ENCODE measurements at regions of chr16 and their contacts with region 1.

Region 1: GRCh38 chr16:77660311-77660710 is 62.0 kb upstream of the NUDT7 start:
- DNase-seq: no peak
- ATAC-seq: no peak
- H3K4me3 ChIP-seq: no peak overlapping the region
- H3K27ac ChIP-seq: no peak overlapping the region
- H3K4me1 ChIP-seq: no peaks in the 10 kb centered on the region
- H3K27me3 ChIP-seq: no peaks in the 10 kb centered on the region

Region 2: DNA sequence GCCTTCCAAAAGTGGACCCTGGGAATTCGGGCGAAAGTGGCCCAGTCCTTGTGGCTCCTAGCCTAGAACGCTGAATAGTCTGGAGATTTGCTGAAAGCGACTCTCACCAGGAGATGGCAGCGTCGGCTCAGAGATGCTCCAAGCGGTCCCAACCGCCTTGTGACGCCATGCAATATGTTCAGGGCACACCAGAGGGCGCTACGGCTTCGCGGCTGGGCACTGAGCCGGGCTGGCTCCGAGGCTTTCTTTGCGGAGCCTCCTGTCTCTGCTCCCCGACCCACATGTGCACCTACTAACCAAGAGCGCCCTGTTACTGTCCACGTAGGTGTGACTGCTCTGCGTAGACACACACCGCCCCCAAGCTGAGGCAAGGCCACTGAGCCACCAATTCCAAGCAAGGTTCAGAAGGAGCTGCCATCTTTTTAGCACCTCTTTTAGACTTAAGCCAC is 424.2 kb before region 1 on chr16:
- intact Hi-C with region 1: loop called in 3 of 4 experiments (anchors 5 to 10 kb)
- DNase-seq: peak; percentile 85 to 93 (median 93)
- ATAC-seq: peak; percentile 97
- H3K4me3 ChIP-seq: peak overlapping the region; percentile 22
- H3K27ac ChIP-seq: no peak overlapping the region
- H3K4me1 ChIP-seq: peaks cover 2% of the 10 kb centered on the region
- H3K27me3 ChIP-seq: no peaks in the 10 kb centered on the region

Region 3: DNA sequence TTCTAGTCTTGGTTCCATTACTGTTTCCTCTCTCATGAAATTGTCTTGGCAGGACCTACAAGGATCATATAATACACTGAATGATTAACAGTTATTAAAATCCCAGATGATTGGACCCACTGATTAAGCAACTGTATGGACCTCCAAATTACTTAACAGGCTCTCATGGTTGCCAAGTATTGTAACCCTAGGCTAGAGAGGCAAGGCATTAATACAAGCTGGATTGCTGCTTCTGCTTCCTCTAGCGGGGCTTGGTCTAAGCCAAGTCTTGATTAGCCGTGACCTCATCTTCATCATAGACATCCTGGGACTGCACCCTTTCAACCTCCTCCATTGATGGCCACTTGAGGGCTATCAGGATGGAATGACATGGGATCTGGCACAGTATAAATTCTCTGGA is 414.2 kb before region 1 on chr16:
- intact Hi-C with region 1: loop called in 1 of 4 experiments (anchors 10 kb)
- DNase-seq: no peak
- ATAC-seq: no peak
- H3K4me3 ChIP-seq: no peak overlapping the region
- H3K27ac ChIP-seq: no peak overlapping the region
- H3K4me1 ChIP-seq: no peaks in the 10 kb centered on the region
- H3K27me3 ChIP-seq: no peaks in the 10 kb centered on the region

Region 4: DNA sequence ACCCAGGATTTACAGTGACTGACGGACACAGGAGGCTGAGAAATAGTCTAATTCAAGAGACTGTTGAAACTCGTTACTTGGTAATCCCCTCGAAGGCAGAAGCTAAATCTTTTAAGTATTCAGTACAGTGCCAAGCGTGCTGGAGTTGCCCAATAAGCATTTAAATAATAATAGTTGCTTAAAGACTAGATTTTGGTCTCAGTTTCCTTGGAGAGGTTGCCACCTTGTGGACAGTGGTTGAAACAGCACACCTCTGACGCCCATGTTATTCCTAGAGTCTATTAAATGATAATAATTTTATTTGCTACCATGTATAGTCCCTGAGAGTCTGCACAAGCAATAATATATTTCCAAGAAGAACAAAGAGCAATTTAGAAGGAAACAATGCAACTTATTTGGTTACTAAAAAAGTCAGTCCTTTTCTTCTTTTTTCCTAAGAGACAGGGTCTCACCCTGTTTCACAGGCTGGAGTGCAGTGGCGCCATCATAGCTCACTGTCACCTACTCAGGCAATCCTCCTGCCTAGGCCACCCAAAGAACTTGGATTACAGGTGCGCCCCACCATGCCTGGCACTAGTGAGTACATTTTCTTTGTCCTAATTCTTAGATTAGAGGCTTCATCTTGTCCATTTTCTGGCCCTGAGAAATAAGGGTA is 76.0 kb before region 1 on chr16:
- intact Hi-C with region 1: loop called in 1 of 4 experiments (anchors 5 kb)
- DNase-seq: peak in 2 of 3 donors; percentile 37 to 62
- ATAC-seq: peak in 1 of 2 donors; percentile 51
- H3K4me3 ChIP-seq: no peak overlapping the region
- H3K27ac ChIP-seq: no peak overlapping the region
- H3K4me1 ChIP-seq: no peaks in the 10 kb centered on the region
- H3K27me3 ChIP-seq: no peaks in the 10 kb centered on the region

Region 5: DNA sequence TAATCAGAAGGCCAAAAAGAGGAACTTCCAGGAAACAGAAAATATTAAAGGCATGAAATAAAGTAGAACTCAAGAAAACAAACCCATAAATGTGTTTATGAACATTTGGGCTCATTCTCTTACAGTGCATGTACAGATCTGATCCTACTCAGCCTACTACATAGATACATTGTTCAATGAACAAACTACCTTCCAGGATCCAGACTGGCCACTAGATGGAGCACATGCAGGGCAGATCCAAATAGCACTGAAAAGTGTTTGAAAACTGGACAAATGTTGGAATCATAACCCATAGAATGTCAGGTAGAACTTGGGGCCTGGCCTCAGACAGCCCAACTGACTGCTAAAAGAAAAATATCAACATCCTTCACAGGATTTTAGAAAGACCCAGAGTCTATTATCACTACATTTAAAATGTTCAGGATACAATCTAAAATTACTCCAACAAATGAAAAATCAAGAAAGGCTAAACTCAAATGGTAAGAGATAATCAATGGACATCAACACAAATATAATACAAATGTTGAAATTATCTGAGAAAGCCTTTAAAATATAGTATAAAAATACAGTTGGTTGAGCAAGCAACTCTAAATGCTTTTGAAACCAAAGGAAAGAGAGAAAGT is 60.4 kb before region 1 on chr16:
- intact Hi-C with region 1: loop called in 1 of 4 experiments (anchors 5 kb)
- DNase-seq: no peak
- ATAC-seq: no peak
- H3K4me3 ChIP-seq: no peak overlapping the region
- H3K27ac ChIP-seq: no peak overlapping the region
- H3K4me1 ChIP-seq: no peaks in the 10 kb centered on the region
- H3K27me3 ChIP-seq: no peaks in the 10 kb centered on the region

Region 6: DNA sequence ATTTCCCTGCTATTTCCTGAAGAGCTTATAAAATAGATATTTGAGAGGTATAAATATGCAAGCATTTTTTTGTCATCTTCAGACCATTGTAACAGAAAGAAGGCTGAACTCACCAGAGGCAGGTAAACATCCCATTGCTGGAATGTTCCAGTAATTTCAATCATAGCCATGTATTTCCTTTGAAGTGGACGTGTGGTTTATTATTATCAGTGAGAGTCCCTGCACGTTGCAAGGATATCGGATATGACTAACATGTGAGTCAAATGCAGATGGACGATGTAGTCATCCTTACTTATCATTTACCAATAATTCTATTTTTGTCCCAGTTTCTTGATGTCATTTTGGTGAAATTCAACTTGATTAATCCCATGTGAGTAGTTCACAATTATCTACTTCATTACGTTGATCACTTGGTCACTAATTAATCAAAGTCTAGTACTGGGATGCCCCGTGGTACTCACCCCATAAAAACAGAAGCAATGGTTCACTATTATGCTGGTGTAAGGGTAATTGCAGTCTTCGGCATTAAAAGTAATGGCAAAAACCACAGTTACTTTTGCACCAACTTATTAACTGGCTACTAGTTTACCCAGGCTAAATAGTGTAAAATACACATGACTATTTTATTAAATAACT is 217.5 kb after region 1 on chr16:
- intact Hi-C with region 1: no loop called
- DNase-seq: no peak
- ATAC-seq: no peak
- H3K4me3 ChIP-seq: no peak overlapping the region
- H3K27ac ChIP-seq: no peak overlapping the region
- H3K4me1 ChIP-seq: no peaks in the 10 kb centered on the region
- H3K27me3 ChIP-seq: no peaks in the 10 kb centered on the region

Region 7: DNA sequence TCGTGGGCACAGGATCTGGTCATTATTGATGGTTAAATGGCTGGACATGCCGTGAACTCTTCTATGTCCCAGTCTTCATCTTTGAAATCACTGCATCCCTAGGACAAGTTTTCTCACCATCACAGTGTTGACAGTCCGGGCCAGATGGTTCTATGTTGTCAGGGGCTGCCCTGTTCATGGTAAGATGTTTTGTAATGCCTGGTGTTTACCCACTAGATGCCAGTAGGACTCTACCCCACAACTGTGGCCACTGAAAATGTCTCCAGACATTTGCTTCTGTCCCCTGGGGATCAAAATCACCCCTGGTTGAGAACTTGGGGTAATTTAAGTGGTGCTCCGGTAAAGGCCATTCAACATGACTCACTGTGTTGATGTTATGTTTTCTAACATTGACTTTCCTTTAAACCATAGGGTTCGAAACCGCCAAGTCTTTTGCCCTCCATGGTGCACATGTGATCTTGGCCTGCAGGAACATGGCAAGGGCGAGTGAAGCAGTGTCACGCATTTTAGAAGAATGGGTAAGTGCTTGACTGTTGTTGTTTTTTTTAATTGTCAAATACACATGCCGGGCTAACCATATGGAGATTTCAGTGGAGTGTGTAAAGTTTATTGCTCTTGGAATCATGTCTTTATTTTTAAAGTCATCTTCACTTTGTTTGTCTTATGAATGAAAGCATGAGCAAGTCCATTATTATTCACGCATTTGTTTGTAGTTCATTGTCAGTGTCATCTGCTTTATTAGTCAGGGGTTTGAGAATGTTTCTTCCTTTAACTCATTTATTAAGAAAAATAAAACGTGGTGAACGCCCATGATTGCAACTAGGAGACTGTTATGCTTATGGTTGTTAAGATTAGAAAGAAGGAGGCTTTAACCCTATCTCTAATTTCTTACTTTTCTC is 503.7 kb after region 1 on chr16:
- intact Hi-C with region 1: no loop called
- DNase-seq: no peak
- ATAC-seq: no peak
- H3K4me3 ChIP-seq: no peak overlapping the region
- H3K27ac ChIP-seq: no peak overlapping the region
- H3K4me1 ChIP-seq: no peaks in the 10 kb centered on the region
- H3K27me3 ChIP-seq: no peaks in the 10 kb centered on the region

Region 8: DNA sequence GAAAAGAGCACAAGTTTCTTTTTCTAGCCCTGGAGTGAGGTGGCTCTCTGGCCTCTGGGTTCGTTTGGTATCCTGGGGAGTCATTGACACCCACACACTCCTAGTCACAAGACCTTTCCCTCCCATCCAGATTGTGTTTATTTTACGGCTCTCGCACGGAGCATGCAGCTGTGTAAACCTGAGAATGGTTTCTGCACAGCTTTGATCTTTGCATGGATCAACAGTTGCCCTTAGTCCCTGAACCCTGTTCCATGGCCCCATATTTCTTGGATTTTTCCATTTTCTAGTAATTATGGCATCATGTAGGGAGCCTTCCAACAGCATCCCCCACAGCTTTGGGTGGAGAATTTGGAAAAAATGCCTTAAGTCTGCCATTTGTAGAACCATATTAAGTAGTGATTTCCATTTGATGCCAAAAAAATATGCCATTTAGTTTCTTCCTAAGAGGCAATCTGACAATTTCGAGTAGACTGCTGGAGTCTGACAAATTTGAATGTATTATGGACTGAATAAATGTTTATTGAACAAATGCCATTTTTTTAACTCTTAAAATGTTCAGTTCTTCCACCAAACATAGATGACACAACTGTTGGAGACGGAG is 636.9 kb after region 1 on chr16:
- intact Hi-C with region 1: no loop called
- DNase-seq: no peak
- ATAC-seq: no peak
- H3K4me3 ChIP-seq: no peak overlapping the region
- H3K27ac ChIP-seq: no peak overlapping the region
- H3K4me1 ChIP-seq: no peaks in the 10 kb centered on the region
- H3K27me3 ChIP-seq: no peaks in the 10 kb centered on the region

Measured in right cardiac atrium (tissue), 5 donors.